GM13977 (cell line): ENCODE measurements at regions of chr1 and their contacts with region 1.

Region 1: GRCh38 chr1:209860293-209860881 is 32.6 kb downstream of the UTP25 start:
- DNase-seq: peak; percentile 87
- CTCF ChIP-seq: peak; percentile 90

Region 2: GRCh38 chr1:209989525-209989924 is 129.1 kb after region 1 on chr1:
- in situ Hi-C with region 1: loop called (anchors 25 kb)
- DNase-seq: peak; percentile 6
- CTCF ChIP-seq: no peak

Region 3: DNA sequence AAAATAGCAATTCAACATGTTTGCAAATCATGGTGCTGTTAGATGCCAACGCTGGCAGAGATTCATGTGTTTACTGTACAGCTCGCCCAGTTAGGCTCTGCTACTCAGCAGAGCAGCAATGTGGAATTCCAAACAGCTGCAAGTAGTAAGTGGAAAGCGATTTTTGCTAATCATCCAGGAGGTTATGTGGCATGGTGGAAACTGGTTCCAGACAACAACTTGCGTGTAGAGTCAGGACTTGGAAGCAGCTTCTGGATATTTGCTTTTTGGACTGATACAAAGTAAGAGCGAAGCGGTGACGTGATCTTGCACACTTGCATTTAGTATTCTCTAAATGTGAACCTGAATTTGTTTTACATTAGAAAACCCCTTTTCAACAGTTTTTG is 441.2 kb after region 1 on chr1:
- in situ Hi-C with region 1: loop called (anchors 25 kb)
- DNase-seq: no peak
- CTCF ChIP-seq: no peak